Caco-2 (cell line): ENCODE measurements at regions of chr10 and their contacts with region 1.

Region 1: DNA sequence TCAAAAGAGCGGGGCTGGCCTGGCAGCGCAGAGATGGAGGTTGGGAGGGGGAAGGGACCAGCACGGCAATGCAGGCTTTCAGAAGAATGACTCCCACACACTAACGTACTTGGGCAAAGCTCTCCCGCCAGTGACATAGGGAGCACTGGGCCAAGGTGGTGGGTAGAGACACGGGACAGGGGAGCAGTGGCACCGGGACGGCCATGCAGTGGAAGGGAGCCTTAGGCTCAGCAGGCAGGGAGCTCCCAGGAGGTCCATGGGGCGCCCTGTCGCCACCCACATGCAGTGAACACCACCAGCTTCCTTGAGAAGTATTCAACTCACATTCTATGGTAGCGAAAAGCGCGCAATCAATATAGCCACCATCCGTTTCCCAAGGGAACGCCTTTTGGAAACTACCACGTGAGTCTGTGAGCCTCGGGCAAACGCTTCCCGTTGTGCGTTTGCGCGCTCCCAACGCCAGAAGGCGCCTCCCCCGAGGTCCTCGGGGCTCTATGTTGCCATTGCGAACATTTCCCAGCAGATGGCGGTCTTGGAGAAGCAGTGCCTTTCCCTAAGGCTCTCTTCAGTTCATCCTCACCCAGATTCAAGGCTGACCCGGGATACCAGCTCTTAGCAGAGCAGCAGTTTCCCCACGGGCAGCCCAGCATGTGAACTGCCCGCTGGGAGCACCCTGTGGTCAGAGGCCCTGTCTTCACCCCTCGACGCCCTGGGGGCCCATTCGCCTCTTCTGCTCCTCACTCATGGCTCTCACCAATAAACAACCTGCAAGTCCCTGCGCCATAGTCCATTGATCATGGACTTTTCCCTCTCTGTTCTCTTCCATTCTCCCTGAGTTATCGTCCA is 16.4 kb upstream of the OPALIN start:
- DNase-seq: peak; percentile 90 to 92
- H3K4me3 ChIP-seq: peak overlapping the region; percentile 37
- H3K4me3 Mint-ChIP-seq: peak overlapping the region; percentile 55
- H3K27ac Mint-ChIP-seq: no peak overlapping the region
- H3K4me1 ChIP-seq: peaks cover 5% of the 10 kb centered on the region
- H3K4me1 Mint-ChIP-seq: peaks cover 13% of the 10 kb centered on the region
- H3K27me3 ChIP-seq: no peaks in the 10 kb centered on the region
- H3K27me3 Mint-ChIP-seq: no peaks in the 10 kb centered on the region
- CTCF ChIP-seq: peak; percentile 96 to 99

Region 2: GRCh38 chr10:96334616-96335526 is 40.3 kb before region 1 on chr10:
- CTCF ChIA-PET with region 1: interaction called, 10 read pairs
- POLR2A ChIA-PET with region 1: no interaction called
- intact Hi-C with region 1: loop called (anchors 2 kb)
- DNase-seq: peak in 1 of 2 experiments; percentile 66
- H3K4me3 ChIP-seq: no peak overlapping the region
- H3K4me3 Mint-ChIP-seq: no peak overlapping the region
- H3K27ac Mint-ChIP-seq: no peak overlapping the region
- H3K4me1 ChIP-seq: no peaks in the 10 kb centered on the region
- H3K4me1 Mint-ChIP-seq: no peaks in the 10 kb centered on the region
- H3K27me3 ChIP-seq: no peaks in the 10 kb centered on the region
- H3K27me3 Mint-ChIP-seq: peaks cover 13% of the 10 kb centered on the region
- CTCF ChIP-seq: peak; percentile 73 to 83

Region 3: GRCh38 chr10:96395931-96396877 is 21.0 kb after region 1 on chr10:
- CTCF ChIA-PET with region 1: interaction called, 5 read pairs
- POLR2A ChIA-PET with region 1: no interaction called
- intact Hi-C with region 1: loop called (anchors 1 kb)
- DNase-seq: peak; percentile 56 to 67
- H3K4me3 ChIP-seq: 0 out of 2 replicates have a peak overlapping the region, but pooled peaks have one; percentile 8
- H3K4me3 Mint-ChIP-seq: no peak overlapping the region
- H3K27ac Mint-ChIP-seq: no peak overlapping the region
- H3K4me1 ChIP-seq: no peaks in the 10 kb centered on the region
- H3K4me1 Mint-ChIP-seq: no peaks in the 10 kb centered on the region
- H3K27me3 ChIP-seq: no peaks in the 10 kb centered on the region; the same call in 1 of the 2 replicates
- H3K27me3 Mint-ChIP-seq: peaks cover 22% of the 10 kb centered on the region
- CTCF ChIP-seq: peak; percentile 88 to 94

Region 4: GRCh38 chr10:96513698-96514561 is 138.7 kb after region 1 on chr10 and contains the start of gene TLL2:
- CTCF ChIA-PET with region 1: interaction called, 20 read pairs
- POLR2A ChIA-PET with region 1: no interaction called
- intact Hi-C with region 1: loop called (anchors 1 kb)
- DNase-seq: peak; percentile 94 to 96
- H3K4me3 ChIP-seq: peak within 1 kb of the TSS; percentile 71
- H3K4me3 Mint-ChIP-seq: peak within 1 kb of the TSS; percentile 82
- H3K27ac Mint-ChIP-seq: no peak within 1 kb of the TSS
- H3K4me1 ChIP-seq: peaks cover 3% of the 10 kb centered on the region; the same call in 1 of the 2 replicates
- H3K4me1 Mint-ChIP-seq: no peaks in the 10 kb centered on the region
- H3K27me3 ChIP-seq: no peaks in the 10 kb centered on the region; the same call in 1 of the 2 replicates
- H3K27me3 Mint-ChIP-seq: peaks cover 4% of the 10 kb centered on the region
- CTCF ChIP-seq: peak; percentile 41 to 58
- total RNA-seq, gene TLL2: 0.14 TPM in 1 of 2 replicates, not detected in the other

Region 5: GRCh38 chr10:96618653-96619052 is 243.4 kb after region 1 on chr10:
- CTCF ChIA-PET with region 1: no interaction called
- POLR2A ChIA-PET with region 1: no interaction called
- intact Hi-C with region 1: no loop called
- DNase-seq: no peak
- H3K4me3 ChIP-seq: no peak overlapping the region
- H3K4me3 Mint-ChIP-seq: no peak overlapping the region
- H3K27ac Mint-ChIP-seq: no peak overlapping the region
- H3K4me1 ChIP-seq: peaks cover 26% of the 10 kb centered on the region
- H3K4me1 Mint-ChIP-seq: peaks cover 14% of the 10 kb centered on the region
- H3K27me3 ChIP-seq: no peaks in the 10 kb centered on the region
- H3K27me3 Mint-ChIP-seq: no peaks in the 10 kb centered on the region
- CTCF ChIP-seq: no peak